ENCODE measurements at regions of chr16 and their contacts with region 1.

Region 1: GRCh38 chr16:10918294-10919002 is 23.8 kb downstream of the DEXI start:
- DNase-seq: peak; percentile 84 to 100
- H3K4me3 ChIP-seq: no peak overlapping the region
- H3K27ac ChIP-seq: peak overlapping the region; percentile 1 to 58
- H3K4me1 ChIP-seq: peaks cover 0 to 33% of the 10 kb centered on the region in 2 donors
- H3K27me3 ChIP-seq: no peaks in the 10 kb centered on the region
- CTCF ChIP-seq: peak; percentile 92 to 98 (median 95)

Region 2: GRCh38 chr16:10509534-10510025 is 408.9 kb before region 1 on chr16:
- intact Hi-C with region 1: loop called (anchors 1 kb)
- DNase-seq: no peak
- H3K4me3 ChIP-seq: no peak overlapping the region
- H3K27ac ChIP-seq: no peak overlapping the region
- H3K4me1 ChIP-seq: peaks cover 4 to 6% of the 10 kb centered on the region in 2 donors
- H3K27me3 ChIP-seq: no peaks in the 10 kb centered on the region
- CTCF ChIP-seq: peak; percentile 63 to 79 (median 72)

Region 3: DNA sequence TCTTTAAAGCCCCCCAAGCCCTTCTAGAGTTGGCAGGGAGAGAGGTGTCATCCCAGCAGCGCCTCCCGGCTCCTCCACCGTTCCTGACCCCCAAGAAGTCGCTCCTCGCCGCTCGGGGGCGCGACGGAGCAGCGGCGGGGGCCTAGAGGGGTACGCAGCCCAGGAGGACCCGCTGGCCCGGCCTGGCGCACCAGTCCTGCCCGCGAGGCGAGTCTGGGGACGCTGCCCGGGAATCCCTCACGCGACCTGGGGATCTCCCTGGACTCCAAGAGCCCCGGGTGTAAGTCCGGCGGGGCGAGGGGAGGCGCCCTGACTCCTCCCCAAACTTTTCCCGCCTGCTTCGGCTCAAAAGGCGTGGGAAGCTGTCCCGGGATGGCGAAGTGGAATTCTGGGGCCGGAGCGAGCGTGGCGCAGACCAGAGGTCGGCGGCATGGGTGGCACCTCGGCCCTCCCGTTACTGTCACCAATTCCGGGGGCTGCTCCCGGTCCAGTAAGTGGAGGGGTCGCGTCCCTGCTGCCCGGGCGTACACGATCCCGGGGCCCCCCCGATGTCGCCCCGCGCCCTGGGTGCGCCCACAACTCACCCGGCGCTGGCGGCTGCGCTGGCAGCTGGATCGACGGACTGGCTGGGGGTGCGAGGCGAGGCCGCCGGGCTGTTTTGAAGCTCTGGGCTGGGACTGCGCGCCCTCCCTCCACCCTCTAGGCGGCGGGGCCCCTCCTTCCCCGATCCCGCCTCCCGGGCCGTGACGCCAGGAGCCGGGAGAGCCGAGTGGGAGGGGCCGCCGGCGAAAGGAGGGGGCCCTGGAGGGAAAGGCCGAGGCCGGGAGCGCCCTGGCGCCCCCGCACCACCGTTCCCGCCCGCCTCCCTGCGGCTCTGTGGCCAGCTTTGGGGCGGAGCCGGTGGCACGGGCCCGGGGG is 338.2 kb before region 1 on chr16 and contains the start of gene EMP2:
- intact Hi-C with region 1: loop called (anchors 5 kb)
- DNase-seq: peak; percentile 43 to 90
- H3K4me3 ChIP-seq: peak within 1 kb of the TSS; percentile 72 to 90
- H3K27ac ChIP-seq: peak within 1 kb of the TSS; percentile 87 to 97
- H3K4me1 ChIP-seq: peaks cover 6 to 42% of the 10 kb centered on the region in 2 donors
- H3K27me3 ChIP-seq: no peaks in the 10 kb centered on the region
- CTCF ChIP-seq: peak; percentile 45 to 72 (median 54)
- total RNA-seq, gene EMP2: 49.2 TPM

Region 4: GRCh38 chr16:10743610-10744393 is 174.6 kb before region 1 on chr16 and contains the start of gene NUBP1:
- intact Hi-C with region 1: loop called (anchors 2 kb)
- DNase-seq: peak; percentile 99 to 100
- H3K4me3 ChIP-seq: peak within 1 kb of the TSS; percentile 66 to 71
- H3K27ac ChIP-seq: peak within 1 kb of the TSS; percentile 95
- H3K4me1 ChIP-seq: peaks cover 12 to 24% of the 10 kb centered on the region in 2 donors
- H3K27me3 ChIP-seq: no peaks in the 10 kb centered on the region
- CTCF ChIP-seq: no peak
- total RNA-seq, gene NUBP1: 13.3 TPM

Region 5: GRCh38 chr16:10828851-10829731 is 89.4 kb before region 1 on chr16:
- intact Hi-C with region 1: loop called (anchors 2 kb)
- DNase-seq: peak; percentile 79 to 98
- H3K4me3 ChIP-seq: peak overlapping the region in 1 of 2 donors; percentile 30
- H3K27ac ChIP-seq: peak overlapping the region; percentile 93 to 99
- H3K4me1 ChIP-seq: peaks cover 10 to 25% of the 10 kb centered on the region in 2 donors
- H3K27me3 ChIP-seq: no peaks in the 10 kb centered on the region
- CTCF ChIP-seq: no peak

Region 6: GRCh38 chr16:11045846-11046245 is 127.4 kb after region 1 on chr16:
- intact Hi-C with region 1: no loop called
- DNase-seq: no peak
- H3K4me3 ChIP-seq: no peak overlapping the region
- H3K27ac ChIP-seq: no peak overlapping the region
- H3K4me1 ChIP-seq: no peaks in the 10 kb centered on the region
- H3K27me3 ChIP-seq: no peaks in the 10 kb centered on the region
- CTCF ChIP-seq: no peak

Measured in ascending aorta (tissue), 2 donors.